ENCODE measurements at regions of chr2 and their contacts with region 1.

Region 1: GRCh38 chr2:237096911-237097310 is 11.2 kb downstream of the COPS8 start:
- DNase-seq: no peak
- ATAC-seq: no peak
- H3K4me3 ChIP-seq: no peak overlapping the region
- H3K4me3 Mint-ChIP-seq: no peak overlapping the region
- H3K27ac ChIP-seq: no peak overlapping the region
- H3K27ac Mint-ChIP-seq: no peak overlapping the region
- H3K4me1 ChIP-seq: no peaks in the 10 kb centered on the region
- H3K4me1 Mint-ChIP-seq: no peaks in the 10 kb centered on the region
- H3K27me3 ChIP-seq: no peaks in the 10 kb centered on the region
- H3K27me3 Mint-ChIP-seq: no peaks in the 10 kb centered on the region
- CTCF ChIP-seq: no peak

Region 2: DNA sequence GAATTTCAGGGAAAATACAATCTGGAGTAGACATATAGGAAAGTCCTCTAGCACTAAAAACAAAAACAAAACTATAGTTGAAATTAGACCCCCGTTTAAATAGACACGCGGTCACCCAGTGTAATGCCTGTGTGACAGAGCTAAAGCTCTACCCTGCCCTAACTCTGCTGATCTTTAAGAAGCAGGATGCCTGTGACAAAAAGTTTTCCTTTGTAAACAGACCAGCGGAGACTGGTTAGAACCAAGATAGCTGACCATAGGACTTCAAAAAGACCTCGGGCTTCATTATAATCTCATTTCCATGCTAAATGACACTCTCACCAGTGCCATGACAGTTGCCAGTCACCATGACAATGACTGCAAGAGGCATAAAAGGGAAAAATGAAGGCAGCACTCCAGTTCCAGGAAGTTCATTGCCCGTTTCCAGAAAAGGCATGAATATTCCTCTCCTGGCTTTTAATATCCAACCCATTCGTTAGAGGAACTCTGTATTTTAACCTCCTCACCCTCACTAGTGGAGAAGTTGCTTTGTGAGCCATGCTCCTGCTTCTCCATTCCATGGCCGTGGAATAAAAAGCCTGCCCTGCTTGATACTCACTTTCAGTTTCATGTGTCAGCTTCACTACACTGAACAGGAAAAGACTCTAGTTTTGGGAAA is 168.4 kb before region 1 on chr2:
- CTCF ChIA-PET with region 1: no interaction called
- POLR2A ChIA-PET with region 1: interaction called, 11 read pairs
- intact Hi-C with region 1: no loop called
- DNase-seq: no peak
- ATAC-seq: no peak
- H3K4me3 ChIP-seq: peak overlapping the region in 3 of 5 experiments; percentile 23 to 30 (median 27)
- H3K4me3 Mint-ChIP-seq: peak overlapping the region; percentile 55
- H3K27ac ChIP-seq: no peak overlapping the region
- H3K27ac Mint-ChIP-seq: no peak overlapping the region
- H3K4me1 ChIP-seq: peaks cover 5 to 6% of the 10 kb centered on the region in 2 donors
- H3K4me1 Mint-ChIP-seq: peaks cover 6% of the 10 kb centered on the region
- H3K27me3 ChIP-seq: peaks cover 0 to 10% (median 7%) of the 10 kb centered on the region in 4 experiments
- H3K27me3 Mint-ChIP-seq: peaks cover 25% of the 10 kb centered on the region
- CTCF ChIP-seq: no peak